Dendritic cell treated with granulocyte-macrophage colony-stimulating factor and Interleukin-4, amounts not matched to agents 40 ng/mL and 50 ng/mL, for 4 days (primary cell): ENCODE measurements at regions of chr19 and their contacts with region 1.

Region 1: GRCh38 chr19:56252699-56253422 is 19.7 kb upstream of the EDDM13 start:
- H3K4me3 Mint-ChIP-seq: no peak overlapping the region
- H3K27ac Mint-ChIP-seq: peak overlapping the region; percentile 24
- H3K4me1 Mint-ChIP-seq: no peaks in the 10 kb centered on the region
- H3K27me3 Mint-ChIP-seq: no peaks in the 10 kb centered on the region

Region 2: GRCh38 chr19:56080669-56081401 is 172.0 kb before region 1 on chr19:
- intact Hi-C with region 1: loop called (anchors 10 kb)
- H3K4me3 Mint-ChIP-seq: peak overlapping the region; percentile 72
- H3K27ac Mint-ChIP-seq: peak overlapping the region; percentile 78
- H3K4me1 Mint-ChIP-seq: peaks cover 23% of the 10 kb centered on the region
- H3K27me3 Mint-ChIP-seq: peaks cover 4% of the 10 kb centered on the region

Region 3: DNA sequence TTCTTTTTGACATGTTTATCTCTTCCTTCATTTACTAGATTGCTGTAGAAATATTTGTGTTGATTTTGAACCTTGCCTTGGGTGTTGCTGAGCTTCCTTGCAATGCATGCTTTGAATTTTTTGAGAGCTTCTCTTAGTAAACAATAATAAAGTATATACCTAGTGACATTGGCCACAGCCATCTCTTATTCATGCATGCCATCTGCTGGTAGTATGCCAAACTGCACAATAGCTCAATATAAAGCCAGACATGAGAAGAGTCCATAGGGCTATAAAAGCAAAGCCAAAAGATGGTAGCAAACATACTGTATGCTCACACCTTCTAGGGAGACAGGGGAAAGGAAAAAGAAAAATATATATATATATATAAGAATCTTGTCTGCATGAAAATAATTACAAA is 80.6 kb after region 1 on chr19:
- intact Hi-C with region 1: loop called (anchors 1 kb)
- H3K4me3 Mint-ChIP-seq: no peak overlapping the region
- H3K27ac Mint-ChIP-seq: no peak overlapping the region
- H3K4me1 Mint-ChIP-seq: no peaks in the 10 kb centered on the region
- H3K27me3 Mint-ChIP-seq: no peaks in the 10 kb centered on the region